ENCODE measurements at regions of chr15 and their contacts with region 1.

Region 1: DNA sequence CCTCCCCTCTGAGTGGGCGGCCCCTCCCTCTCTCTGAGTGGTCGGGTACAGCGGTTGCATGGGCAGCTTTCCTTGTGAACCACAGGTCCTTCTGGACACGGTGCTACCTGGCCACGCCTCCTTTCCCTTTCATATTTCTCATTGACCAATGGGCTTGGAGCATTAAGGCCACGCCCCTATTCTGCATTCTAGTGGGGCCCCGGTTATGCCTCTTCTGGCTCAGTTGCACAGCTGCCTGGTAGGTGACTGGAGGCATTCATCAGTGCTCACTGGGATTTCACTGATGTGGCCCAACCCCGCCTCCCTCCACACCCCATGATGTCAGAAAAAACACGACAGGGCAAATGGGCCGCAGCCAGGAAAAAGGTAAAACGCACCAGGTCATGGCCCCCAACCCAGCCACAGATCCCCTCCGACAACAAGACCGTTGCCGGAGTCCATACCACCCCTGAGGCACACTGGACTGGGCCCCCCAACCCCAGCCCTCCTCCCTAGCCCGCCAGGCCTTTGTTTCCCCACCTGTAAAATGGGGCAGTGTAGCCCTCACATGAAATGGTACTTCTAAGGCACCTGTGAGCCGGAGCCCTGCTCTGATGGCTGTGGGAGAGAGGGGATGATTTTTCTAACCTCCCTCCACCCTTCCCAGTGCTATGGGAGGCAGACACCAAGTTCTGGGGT is 26.3 kb downstream of the NGRN start:
- DNase-seq: peak; percentile 38
- H3K4me3 Mint-ChIP-seq: no peak overlapping the region
- H3K27ac Mint-ChIP-seq: no peak overlapping the region
- H3K4me1 Mint-ChIP-seq: peaks cover 19% of the 10 kb centered on the region
- H3K27me3 Mint-ChIP-seq: peaks cover 16% of the 10 kb centered on the region

Region 2: GRCh38 chr15:90306560-90306959 is 14.7 kb after region 1 on chr15:
- CTCF ChIA-PET with region 1: interaction called, 49 read pairs
- POLR2A ChIA-PET with region 1: interaction called, 5 read pairs
- DNase-seq: peak; percentile 49
- H3K4me3 Mint-ChIP-seq: peak overlapping the region; percentile 6
- H3K27ac Mint-ChIP-seq: peak overlapping the region; percentile 50
- H3K4me1 Mint-ChIP-seq: peaks cover 35% of the 10 kb centered on the region
- H3K27me3 Mint-ChIP-seq: peaks cover 7% of the 10 kb centered on the region

Region 3: GRCh38 chr15:90482124-90483011 is 190.6 kb after region 1 on chr15:
- CTCF ChIA-PET with region 1: interaction called, 19 read pairs
- POLR2A ChIA-PET with region 1: no interaction called
- DNase-seq: peak; percentile 53
- H3K4me3 Mint-ChIP-seq: no peak overlapping the region
- H3K27ac Mint-ChIP-seq: peak overlapping the region; percentile 23
- H3K4me1 Mint-ChIP-seq: peaks cover 49% of the 10 kb centered on the region
- H3K27me3 Mint-ChIP-seq: no peaks in the 10 kb centered on the region

Measured in activated CD4-positive, alpha-beta memory T cell treated with anti-CD3 and anti-CD28 coated beads, Interleukin-2, amount 10 ng/mL, durations not matched to agents 7 days and 5 days (primary cell).